Activated CD4-positive, alpha-beta T cell treated with anti-CD3 and anti-CD28 coated beads, Interleukin-2, amount 10 ng/mL, durations not matched to agents 7 days and 5 days (primary cell): ENCODE measurements at regions of chr12 and their contacts with region 1.

Region 1: DNA sequence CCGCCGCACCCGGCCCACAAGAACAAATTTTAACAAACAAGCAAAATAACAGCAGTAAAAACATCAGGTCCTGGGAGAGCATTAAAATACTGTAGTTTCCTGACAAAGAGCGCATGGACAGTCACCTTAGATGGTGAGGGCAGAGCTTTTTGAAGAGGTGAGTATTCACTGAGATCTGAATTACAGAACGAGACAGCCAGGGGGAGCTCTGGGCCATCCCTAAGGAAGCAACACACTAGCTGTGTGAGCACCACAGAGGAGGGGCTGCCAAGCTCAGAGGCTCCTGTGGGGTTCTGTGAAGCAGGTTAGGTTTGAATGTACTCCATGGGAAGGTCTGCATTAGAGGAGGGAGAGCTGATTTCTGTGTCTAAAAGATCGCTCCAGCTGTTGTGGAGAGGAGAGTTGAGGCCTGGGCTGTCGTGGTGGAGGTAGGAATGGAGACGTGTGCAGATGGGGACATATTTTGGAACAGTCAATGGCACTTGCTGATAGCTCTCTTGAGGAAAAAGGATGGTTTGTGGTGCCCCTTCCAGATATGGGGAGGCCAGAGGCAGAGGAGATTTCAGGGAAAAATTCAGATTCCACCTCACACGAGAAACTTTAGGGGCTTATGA is 72.9 kb downstream of the TRAFD1 start:
- DNase-seq: peak; percentile 65
- H3K4me3 Mint-ChIP-seq: no peak overlapping the region
- H3K27ac Mint-ChIP-seq: no peak overlapping the region
- H3K4me1 Mint-ChIP-seq: no peaks in the 10 kb centered on the region
- H3K27me3 Mint-ChIP-seq: no peaks in the 10 kb centered on the region

Region 2: DNA sequence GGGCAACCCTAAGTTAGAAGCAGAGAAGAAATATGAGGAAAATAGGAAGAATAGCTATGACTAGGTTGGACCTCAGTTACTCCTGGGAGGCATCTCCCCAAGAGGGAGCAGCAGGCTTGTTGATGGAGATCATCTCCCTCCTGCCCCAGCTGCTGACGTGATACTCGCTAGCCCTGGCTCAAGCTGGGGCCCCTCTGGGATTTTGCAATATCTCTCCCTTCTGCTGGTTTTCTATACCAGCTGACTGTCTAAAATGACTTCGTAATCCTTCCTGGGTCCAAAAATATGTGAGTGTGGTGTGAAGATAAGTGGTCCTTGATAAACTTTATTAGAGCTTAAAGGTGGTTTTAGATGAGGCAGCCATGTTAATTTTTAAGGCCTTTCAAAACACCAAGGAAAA is 188.5 kb after region 1 on chr12:
- CTCF ChIA-PET with region 1: interaction called, 37 read pairs
- POLR2A ChIA-PET with region 1: no interaction called
- DNase-seq: no peak
- H3K4me3 Mint-ChIP-seq: no peak overlapping the region
- H3K27ac Mint-ChIP-seq: no peak overlapping the region
- H3K4me1 Mint-ChIP-seq: peaks cover 18% of the 10 kb centered on the region
- H3K27me3 Mint-ChIP-seq: peaks cover 12% of the 10 kb centered on the region